ENCODE measurements at regions of chr14 and their contacts with region 1.

Region 1: GRCh38 chr14:36553656-36554260 is 28.7 kb downstream of the NKX2-8 start:
- DNase-seq: peak in 2 of 9 experiments; percentile 6 to 16
- ATAC-seq: no peak
- H3K4me3 ChIP-seq: no peak overlapping the region
- H3K4me3 Mint-ChIP-seq: no peak overlapping the region
- H3K27ac ChIP-seq: no peak overlapping the region
- H3K27ac Mint-ChIP-seq: no peak overlapping the region
- H3K4me1 ChIP-seq: no peaks in the 10 kb centered on the region
- H3K4me1 Mint-ChIP-seq: no peaks in the 10 kb centered on the region
- H3K27me3 ChIP-seq: no peaks in the 10 kb centered on the region
- H3K27me3 Mint-ChIP-seq: peaks cover 11% of the 10 kb centered on the region
- CTCF ChIP-seq: peak; percentile 36

Region 2: DNA sequence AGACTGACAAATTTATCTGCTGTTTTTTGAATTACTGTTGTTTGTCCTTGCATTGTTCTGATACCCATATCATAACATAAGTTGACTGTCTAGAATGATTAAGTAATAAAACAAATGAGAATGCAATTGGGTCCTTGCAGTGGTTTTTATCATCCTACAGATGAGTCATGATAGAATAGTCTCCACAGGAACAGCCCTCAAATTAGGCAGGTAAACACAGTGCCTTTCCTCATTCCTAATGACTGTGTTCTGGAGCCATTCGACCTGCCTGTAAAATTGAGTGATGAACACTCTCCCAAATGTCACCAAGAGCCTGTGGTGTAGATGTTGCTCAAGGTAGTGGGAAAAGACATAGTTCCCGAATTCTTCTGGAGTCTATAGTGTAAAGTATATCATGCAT is 16.3 kb after region 1 on chr14:
- CTCF ChIA-PET with region 1: no interaction called
- POLR2A ChIA-PET with region 1: no interaction called
- intact Hi-C with region 1: no loop called
- DNase-seq: no peak
- ATAC-seq: no peak
- H3K4me3 ChIP-seq: no peak overlapping the region
- H3K4me3 Mint-ChIP-seq: no peak overlapping the region
- H3K27ac ChIP-seq: no peak overlapping the region
- H3K27ac Mint-ChIP-seq: no peak overlapping the region
- H3K4me1 ChIP-seq: no peaks in the 10 kb centered on the region
- H3K4me1 Mint-ChIP-seq: no peaks in the 10 kb centered on the region
- H3K27me3 ChIP-seq: peaks cover 0 to 2% of the 10 kb centered on the region in 2 experiments
- H3K27me3 Mint-ChIP-seq: peaks cover 2% of the 10 kb centered on the region
- CTCF ChIP-seq: no peak

Region 3: DNA sequence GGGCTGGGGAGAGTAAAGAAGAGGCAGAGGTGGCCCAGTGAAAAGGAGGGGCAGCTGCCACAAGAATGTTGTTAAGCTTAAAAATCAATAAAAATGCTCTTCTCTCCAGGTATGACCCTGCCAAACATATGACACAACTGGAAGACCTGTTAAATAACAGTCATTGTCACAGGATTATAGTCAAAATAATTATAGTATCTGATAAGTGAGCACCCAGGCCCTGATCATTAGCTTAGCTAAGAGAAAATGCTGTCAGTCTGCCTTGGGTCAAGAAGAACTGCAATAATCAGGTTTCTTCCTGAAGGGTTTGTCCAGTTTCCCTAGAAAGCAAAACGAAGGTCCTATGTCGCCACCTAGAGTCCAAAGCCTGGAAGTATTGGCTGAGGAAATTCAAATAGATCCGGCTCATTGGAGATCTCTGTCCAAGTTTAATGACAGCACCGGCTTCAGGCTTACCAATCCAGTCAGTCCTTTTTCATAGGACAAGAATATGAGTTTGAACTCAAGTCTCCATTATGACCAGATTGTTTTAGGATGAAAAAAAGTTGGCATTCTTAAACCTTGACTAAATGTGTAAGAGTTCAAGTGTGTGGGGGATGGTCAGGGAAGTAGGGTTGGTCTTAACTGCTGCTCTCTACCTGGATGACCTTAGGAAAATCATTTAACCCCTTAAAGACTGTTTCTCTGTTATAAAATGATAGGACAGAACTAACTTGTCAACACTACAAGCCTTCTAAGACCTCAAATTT is 51.2 kb after region 1 on chr14:
- CTCF ChIA-PET with region 1: interaction called, 10 read pairs
- POLR2A ChIA-PET with region 1: no interaction called
- intact Hi-C with region 1: no loop called
- DNase-seq: peak in 4 of 9 experiments; percentile 7 to 45 (median 26)
- ATAC-seq: no peak
- H3K4me3 ChIP-seq: no peak overlapping the region
- H3K4me3 Mint-ChIP-seq: no peak overlapping the region
- H3K27ac ChIP-seq: no peak overlapping the region
- H3K27ac Mint-ChIP-seq: no peak overlapping the region
- H3K4me1 ChIP-seq: no peaks in the 10 kb centered on the region
- H3K4me1 Mint-ChIP-seq: no peaks in the 10 kb centered on the region
- H3K27me3 ChIP-seq: no peaks in the 10 kb centered on the region
- H3K27me3 Mint-ChIP-seq: peaks cover 12% of the 10 kb centered on the region
- CTCF ChIP-seq: peak; percentile 61

Region 4: DNA sequence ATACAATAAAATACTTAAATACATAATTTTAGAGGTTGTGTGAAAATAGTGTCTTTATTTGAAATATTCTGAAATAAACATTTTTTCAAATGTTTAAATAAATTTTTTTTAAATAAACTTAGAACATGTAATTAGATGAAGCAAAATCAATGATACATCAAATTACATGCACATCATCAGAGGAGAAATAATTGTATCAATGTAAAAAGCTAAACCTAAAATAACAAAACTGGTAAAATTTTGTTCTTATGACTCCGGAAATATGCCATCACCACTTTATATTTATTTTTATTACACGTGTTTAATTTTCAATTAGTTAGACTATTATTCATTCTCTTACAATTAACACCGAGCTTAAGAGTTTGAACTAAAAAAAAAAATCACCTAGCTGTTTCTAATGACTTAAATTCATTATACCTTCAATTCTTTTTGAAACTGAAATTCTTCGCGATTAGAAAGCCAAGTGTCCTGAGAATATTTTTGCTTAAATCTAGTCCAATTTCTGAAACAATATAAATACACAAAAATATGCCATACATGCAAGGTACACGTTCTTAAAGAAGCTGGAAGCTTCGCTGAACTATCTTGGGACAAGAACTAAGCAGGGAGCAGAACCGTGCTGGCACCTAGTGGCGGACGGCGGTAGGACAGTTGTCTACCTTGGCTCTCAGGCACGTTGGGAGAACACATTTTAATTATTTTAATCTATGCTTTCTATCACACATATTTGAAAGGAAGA is 388.2 kb after region 1 on chr14:
- CTCF ChIA-PET with region 1: no interaction called
- POLR2A ChIA-PET with region 1: no interaction called
- intact Hi-C with region 1: loop called (anchors 5 to 10 kb)
- DNase-seq: peak in 8 of 9 experiments; percentile 3 to 48 (median 23)
- ATAC-seq: peak; percentile 51
- H3K4me3 ChIP-seq: no peak overlapping the region
- H3K4me3 Mint-ChIP-seq: no peak overlapping the region
- H3K27ac ChIP-seq: no peak overlapping the region
- H3K27ac Mint-ChIP-seq: no peak overlapping the region
- H3K4me1 ChIP-seq: no peaks in the 10 kb centered on the region
- H3K4me1 Mint-ChIP-seq: no peaks in the 10 kb centered on the region
- H3K27me3 ChIP-seq: no peaks in the 10 kb centered on the region
- H3K27me3 Mint-ChIP-seq: no peaks in the 10 kb centered on the region
- CTCF ChIP-seq: peak; percentile 91

Measured in CD8-positive, alpha-beta T cell (primary cell).